Cardiac septum (tissue), 1 donor: ENCODE measurements at regions of chr14 and their contacts with region 1.

Region 1: DNA sequence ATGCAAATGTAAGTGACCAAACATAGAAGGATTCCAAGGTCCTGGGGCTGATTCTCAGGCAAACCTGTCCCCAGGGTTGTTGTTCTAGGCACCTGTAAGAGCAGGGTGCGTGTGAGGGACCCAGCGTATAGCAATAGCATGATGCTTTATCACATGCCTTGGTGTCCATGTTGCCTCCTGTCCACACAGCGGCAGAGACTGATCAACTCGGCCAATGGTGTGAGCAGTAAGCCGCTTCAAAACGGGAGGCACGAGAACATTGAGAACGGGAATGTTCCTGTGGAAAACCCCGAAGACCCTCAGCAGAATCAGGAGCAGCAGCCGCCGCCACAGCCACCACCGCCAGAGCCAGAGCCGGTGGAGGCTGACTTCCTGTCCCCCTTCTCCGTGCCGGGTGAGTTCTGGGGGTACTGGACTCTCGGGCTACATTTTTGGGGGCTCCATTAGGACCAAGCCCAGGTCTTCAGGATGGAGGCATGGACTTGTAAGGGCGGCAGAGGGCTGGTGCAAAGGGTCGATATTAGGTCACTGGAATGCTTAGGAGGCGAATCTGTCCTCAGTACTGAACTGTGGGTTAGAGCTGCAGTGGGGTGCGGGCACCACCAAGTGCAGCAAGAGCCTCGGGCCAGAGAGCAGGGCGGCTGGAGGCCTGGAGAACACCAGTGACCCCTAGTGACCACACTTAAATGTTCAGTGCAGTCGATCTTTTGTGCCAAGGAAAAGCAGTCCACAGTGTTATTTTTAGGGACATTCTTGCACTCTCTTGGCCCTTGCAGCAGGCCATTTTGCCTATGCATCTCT is 57.2 kb upstream of the RIN3 start:
- DNase-seq: no peak

Region 2: DNA sequence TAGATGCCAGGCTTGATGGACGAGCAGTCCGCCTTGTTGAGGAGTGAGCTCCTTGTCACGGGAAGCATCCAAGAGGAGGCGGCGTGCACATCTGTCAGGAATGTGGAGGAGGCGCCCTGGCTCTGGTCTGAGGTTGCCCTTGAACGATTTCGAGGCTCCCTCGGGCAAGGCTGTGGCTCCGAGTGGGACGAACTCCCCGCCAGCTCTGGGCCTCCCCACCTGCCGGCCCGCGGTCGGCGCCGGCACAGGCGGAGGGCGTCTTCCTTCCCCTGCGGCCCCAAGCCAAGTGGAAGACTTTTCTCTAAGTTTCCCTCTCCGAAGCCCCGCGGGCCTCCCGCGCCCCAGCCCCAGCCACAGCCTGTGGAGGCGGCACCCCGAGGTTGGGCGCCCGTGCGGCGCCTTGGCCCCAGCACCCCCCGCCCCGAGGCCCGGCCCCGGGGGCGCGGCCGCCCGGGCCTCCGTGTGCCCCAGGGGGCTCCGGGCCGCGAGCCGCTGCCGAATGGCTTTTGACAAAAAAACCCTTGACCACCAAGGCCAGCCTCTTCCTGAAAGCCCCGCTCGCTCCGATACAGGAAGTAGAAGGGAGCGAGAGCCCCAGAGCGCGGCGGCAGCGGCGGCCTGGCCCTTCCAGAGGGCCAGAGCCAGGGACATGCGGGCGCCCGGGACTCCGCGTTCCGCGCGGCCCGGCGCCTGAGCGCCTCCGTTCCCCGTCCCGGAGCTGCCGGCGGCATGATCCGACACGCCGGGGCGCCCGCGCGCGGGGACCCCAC is 57.0 kb after region 1 on chr14 and contains the start of gene RIN3:
- intact Hi-C with region 1: loop called (anchors 2 kb)
- DNase-seq: peak; percentile 87
- total RNA-seq, gene RIN3: 12.1 TPM

Region 3: GRCh38 chr14:92551044-92551841 is 94.8 kb after region 1 on chr14:
- intact Hi-C with region 1: loop called (anchors 5 kb)
- DNase-seq: no peak

Region 4: DNA sequence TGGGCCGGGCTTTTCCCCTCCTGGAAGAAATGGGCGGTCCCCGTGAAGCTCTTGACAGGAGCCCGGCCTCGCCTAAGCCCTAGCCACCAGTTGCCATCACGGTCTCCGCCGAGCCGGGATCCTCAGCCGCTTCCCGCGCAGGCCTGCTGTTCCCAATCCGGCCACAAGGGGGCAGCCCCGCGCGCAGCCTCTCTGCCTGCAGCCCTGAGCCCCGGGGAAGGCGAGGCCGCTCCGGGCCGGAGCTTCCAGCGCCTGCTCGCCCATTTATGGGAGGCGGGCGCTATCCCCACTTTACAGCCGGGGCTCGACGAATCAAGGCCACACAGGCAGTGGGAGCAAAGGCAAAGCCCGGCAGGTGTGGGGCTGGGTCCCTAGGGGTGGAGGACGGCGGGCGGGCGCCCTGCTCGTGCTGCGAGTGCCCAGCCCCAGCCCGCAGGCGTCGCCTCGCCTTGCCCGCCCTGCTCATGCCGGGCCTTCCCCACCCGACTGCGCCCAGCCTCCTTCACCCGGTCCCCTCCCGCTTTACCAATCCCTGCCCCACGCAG is 230.6 kb after region 1 on chr14:
- intact Hi-C with region 1: loop called (anchors 10 kb)
- DNase-seq: peak; percentile 90